ENCODE measurements at regions of chr11 and their contacts with region 1.

Region 1: GRCh38 chr11:73787643-73788537 is at the start of gene MRPL48:
- DNase-seq: peak; percentile 95
- H3K4me3 Mint-ChIP-seq: peak within 1 kb of the TSS; percentile 95
- H3K27ac Mint-ChIP-seq: peak within 1 kb of the TSS; percentile 96
- H3K4me1 Mint-ChIP-seq: peaks cover 12% of the 10 kb centered on the region
- H3K27me3 Mint-ChIP-seq: no peaks in the 10 kb centered on the region
- CTCF ChIP-seq: no peak
- total RNA-seq, gene MRPL48: 36.8 and 41.6 TPM in 2 replicates

Region 2: DNA sequence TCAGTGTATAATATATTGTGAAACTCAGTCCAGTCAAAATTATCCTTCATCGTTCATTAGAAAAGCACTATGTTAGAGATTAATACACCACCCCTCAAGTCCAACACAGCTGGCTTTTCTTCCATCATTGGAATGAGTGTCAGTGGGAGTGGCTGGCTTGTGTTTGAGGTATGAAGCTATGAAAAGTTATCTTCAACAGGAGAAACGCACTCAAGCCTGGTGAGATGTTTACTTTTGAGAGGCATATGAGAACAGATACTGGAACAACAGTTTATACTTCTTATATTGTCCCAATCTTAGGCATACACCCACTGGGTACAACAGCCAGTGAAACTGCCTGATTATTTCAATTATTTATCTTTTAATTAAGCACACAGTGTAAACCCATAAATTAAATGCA is 107.2 kb before region 1 on chr11:
- CTCF ChIA-PET with region 1: no interaction called
- POLR2A ChIA-PET with region 1: no interaction called
- intact Hi-C with region 1: no loop called
- DNase-seq: no peak
- H3K4me3 Mint-ChIP-seq: no peak overlapping the region
- H3K27ac Mint-ChIP-seq: no peak overlapping the region
- H3K4me1 Mint-ChIP-seq: no peaks in the 10 kb centered on the region
- H3K27me3 Mint-ChIP-seq: no peaks in the 10 kb centered on the region
- CTCF ChIP-seq: no peak

Region 3: DNA sequence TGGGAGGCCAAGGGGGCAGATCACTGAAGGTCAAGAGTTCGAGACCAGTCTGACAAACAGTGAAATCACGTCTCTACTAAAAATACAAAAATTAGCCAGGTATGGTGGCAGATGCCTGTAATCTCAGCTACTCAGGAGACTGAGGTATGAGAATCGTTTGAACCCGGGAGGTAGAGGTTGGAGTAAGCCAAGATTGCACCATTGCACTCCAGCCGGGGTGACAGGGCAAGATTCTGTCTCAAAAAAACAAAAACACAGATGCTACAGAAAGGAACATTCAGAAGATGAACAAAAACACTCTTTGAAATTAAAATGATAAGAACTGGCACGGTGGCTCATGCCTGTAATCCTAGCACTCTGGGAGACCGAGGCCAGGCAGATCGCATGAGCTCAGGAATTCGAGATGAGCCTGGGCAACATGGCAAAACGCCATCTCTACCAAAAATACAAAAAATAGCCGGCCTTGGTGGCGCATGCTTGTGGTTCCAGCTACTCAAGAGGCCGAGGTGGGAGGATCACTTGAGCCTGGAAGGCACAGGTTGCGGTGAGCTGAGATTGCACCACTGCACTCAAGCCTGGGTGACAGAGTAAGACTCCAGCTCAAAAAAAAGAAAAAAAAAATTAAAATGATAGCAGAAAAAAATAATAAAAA is 35.5 kb before region 1 on chr11:
- CTCF ChIA-PET with region 1: no interaction called
- POLR2A ChIA-PET with region 1: interaction called, 32 read pairs
- intact Hi-C with region 1: no loop called
- DNase-seq: peak; percentile 86
- H3K4me3 Mint-ChIP-seq: peak overlapping the region; percentile 55
- H3K27ac Mint-ChIP-seq: peak overlapping the region; percentile 71
- H3K4me1 Mint-ChIP-seq: peaks cover 28% of the 10 kb centered on the region
- H3K27me3 Mint-ChIP-seq: no peaks in the 10 kb centered on the region
- CTCF ChIP-seq: no peak

Region 4: DNA sequence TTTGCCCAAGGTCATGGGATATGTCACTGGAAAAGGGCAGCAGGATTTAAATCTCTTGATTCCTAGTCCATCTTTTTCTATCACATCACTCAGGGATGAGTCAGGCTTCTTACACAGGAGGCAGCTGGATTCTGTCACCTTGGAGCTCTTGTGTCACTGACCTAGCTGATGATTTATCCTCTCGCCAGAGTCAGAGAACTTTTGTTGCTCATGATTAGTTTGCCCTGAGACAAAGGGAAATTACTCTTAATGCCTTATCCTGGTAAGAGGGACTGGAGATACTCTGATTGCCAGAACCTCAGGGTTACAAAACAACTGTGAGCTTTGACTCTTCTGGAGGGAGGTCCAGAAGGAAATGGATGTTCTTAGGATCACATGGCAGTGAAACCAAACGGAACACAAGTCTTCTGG is 78.7 kb after region 1 on chr11:
- CTCF ChIA-PET with region 1: no interaction called
- POLR2A ChIA-PET with region 1: interaction called, 22 read pairs
- intact Hi-C with region 1: no loop called
- DNase-seq: peak; percentile 75
- H3K4me3 Mint-ChIP-seq: no peak overlapping the region
- H3K27ac Mint-ChIP-seq: no peak overlapping the region
- H3K4me1 Mint-ChIP-seq: peaks cover 13% of the 10 kb centered on the region
- H3K27me3 Mint-ChIP-seq: no peaks in the 10 kb centered on the region
- CTCF ChIP-seq: no peak

Region 5: GRCh38 chr11:73876424-73877300 is 88.8 kb after region 1 on chr11 and contains the starts of genes COA4 and PAAF1:
- CTCF ChIA-PET with region 1: no interaction called
- POLR2A ChIA-PET with region 1: interaction called, 25 read pairs
- intact Hi-C with region 1: loop called (anchors 2 kb)
- DNase-seq: peak; percentile 98
- H3K4me3 Mint-ChIP-seq: peak within 1 kb of the TSS; percentile 94
- H3K27ac Mint-ChIP-seq: peak within 1 kb of the TSS; percentile 92
- H3K4me1 Mint-ChIP-seq: peaks cover 12% of the 10 kb centered on the region
- H3K27me3 Mint-ChIP-seq: no peaks in the 10 kb centered on the region
- CTCF ChIP-seq: no peak
- total RNA-seq, gene COA4: 87.1 and 103 TPM in 2 replicates
- total RNA-seq, gene PAAF1: 21.6 and 26.4 TPM in 2 replicates